Activated B cell treated with CpG ODN at 0.5 μM for 24 hours (primary cell): ENCODE measurements at regions of chr3 and their contacts with region 1.

Region 1: DNA sequence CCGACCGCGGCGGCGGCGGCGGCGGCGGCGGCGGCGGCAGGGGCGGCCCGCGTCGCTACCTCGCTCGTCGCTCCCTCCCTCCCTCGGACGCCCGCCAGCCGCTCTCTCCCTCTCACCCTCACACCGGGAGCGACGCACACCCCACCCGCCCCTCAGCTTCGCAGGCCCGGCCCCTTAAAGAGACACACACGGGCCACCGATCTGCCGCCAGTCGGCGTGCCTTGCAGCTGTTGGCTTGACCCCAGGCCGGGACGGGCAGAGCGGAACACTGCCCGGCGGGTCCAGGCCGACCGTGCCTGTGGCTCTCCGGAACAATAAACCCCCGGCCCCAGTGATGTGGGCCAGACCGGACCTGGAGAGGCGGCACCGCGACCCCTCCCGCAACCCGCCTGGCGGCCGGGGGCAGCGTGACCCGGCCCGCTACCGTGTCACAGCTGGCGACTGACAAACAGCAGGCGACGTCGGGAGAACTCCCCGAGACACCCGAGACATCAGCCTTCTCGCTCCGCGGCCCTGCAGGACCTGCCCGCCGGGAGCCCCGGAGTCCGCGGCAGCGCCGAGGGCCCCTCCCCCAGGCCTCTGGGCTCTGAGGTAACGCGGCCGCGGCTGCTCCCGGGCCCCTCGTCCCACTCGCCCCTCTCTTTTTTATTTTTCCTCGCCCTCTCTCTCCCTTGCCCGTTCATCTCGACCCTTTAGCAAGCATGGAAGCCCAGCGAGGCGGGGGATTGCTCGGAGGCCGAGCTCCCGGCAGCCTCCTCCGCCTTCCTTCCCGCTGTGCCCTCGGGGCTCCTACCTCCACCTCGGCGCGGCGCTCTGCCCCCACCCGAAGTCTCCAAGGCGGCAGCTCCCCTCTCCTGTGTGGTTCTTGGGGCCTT is at the start of gene SETD2:
- DNase-seq: peak; percentile 80
- ATAC-seq: peak; percentile 86
- H3K4me3 Mint-ChIP-seq: peak within 1 kb of the TSS; percentile 98
- H3K27ac Mint-ChIP-seq: peak within 1 kb of the TSS; percentile 96
- H3K4me1 Mint-ChIP-seq: peaks cover 53% of the 10 kb centered on the region
- H3K27me3 Mint-ChIP-seq: no peaks in the 10 kb centered on the region
- CTCF ChIP-seq: no peak
- total RNA-seq, gene SETD2: 56.9 and 65.7 TPM in 2 replicates

Region 2: DNA sequence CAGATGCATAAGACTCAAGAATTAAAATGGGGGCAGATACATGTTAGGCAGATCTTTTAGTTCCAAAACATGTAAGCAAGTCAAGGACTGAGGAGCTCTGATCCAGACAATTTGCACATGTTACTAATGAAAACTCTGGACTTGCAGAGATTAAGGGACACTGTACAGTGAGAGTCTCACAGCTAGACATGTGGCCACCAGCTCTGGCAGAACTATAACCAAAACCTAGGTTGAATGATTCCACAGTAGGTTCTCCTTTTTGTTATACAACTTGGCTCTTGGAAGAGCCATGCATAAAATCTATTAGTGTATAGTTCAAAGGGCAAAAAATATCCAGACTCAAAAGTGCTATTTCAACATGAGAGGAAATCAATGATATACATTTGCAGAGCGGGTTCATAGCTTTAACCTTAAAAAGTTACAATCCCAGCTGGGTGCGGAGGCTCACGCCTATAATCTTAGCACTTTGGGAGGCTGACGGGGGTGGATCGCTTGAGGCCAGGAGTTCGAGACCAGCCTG is 62.1 kb before region 1 on chr3:
- CTCF ChIA-PET with region 1: no interaction called
- POLR2A ChIA-PET with region 1: no interaction called
- intact Hi-C with region 1: no loop called
- DNase-seq: no peak
- ATAC-seq: no peak
- H3K4me3 Mint-ChIP-seq: no peak overlapping the region
- H3K27ac Mint-ChIP-seq: no peak overlapping the region
- H3K4me1 Mint-ChIP-seq: no peaks in the 10 kb centered on the region
- H3K27me3 Mint-ChIP-seq: no peaks in the 10 kb centered on the region
- CTCF ChIP-seq: no peak

Region 3: DNA sequence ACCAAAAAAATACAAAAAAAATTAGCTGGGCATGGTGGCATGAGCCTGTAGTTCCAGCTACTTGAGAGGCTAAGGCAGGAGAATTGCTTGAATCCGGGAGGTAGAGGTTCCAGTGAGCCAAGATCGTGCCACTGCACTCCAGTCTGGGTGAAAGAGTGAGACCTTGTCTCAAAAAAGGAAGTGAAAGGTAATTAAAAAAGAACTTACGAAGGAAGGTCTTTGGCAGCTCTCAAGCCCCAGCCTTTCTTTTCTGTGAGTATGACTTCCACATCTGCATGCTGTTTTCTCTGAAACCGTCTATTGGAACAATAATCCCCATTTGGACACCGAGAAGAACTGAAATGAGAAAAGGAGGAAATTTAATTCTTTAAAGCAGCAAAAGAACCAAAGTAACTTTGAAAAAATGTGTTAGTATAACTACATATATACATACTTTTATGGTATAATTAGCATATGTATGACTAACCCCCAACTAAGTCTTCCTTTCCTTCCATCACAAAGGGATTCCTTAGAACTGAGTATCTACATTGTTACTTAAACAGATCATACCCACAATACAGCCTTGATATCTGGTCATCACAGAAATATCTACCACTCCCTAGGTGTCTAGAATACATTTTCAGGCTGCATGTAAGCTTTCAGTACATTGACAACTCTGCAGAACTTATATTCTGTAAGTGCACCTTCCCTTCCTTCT is 50.4 kb before region 1 on chr3:
- CTCF ChIA-PET with region 1: interaction called, 4 read pairs
- POLR2A ChIA-PET with region 1: interaction called, 3 read pairs
- intact Hi-C with region 1: loop called (anchors 5 kb)
- DNase-seq: no peak
- ATAC-seq: peak; percentile 82
- H3K4me3 Mint-ChIP-seq: peak overlapping the region; percentile 21
- H3K27ac Mint-ChIP-seq: peak overlapping the region; percentile 36
- H3K4me1 Mint-ChIP-seq: peaks cover 26% of the 10 kb centered on the region
- H3K27me3 Mint-ChIP-seq: no peaks in the 10 kb centered on the region
- CTCF ChIP-seq: no peak

Region 4: DNA sequence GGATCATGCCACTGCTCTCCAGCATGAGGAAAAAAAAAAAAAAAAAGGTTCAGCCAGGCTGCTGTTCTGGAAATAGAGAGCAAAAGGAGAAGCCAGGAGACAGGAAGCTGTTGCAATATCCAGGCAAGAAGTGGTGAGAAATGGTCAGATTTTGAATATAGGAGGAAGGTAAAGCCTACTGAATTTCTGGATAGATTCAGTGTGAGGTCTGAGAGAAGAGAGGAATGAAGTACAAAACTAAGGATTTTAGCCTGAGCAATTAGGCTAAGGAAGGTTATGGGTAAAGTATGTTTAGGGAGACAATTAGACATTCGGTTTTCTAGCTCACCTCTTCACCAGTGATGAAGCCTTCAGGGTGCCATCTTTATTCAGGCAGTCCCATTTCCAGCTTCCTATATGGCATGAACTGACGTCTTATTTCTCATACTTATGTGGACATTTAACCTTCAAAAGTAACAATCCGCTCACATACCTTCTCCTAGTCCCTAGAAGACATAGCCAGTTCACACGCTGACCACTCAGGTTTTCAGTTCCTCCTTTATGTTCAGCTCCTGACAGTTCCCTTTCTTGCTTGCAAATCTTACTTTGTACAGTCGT is 61.2 kb after region 1 on chr3:
- CTCF ChIA-PET with region 1: interaction called, 5 read pairs
- POLR2A ChIA-PET with region 1: no interaction called
- intact Hi-C with region 1: loop called (anchors 5 kb)
- DNase-seq: no peak
- ATAC-seq: peak; percentile 54
- H3K4me3 Mint-ChIP-seq: no peak overlapping the region
- H3K27ac Mint-ChIP-seq: no peak overlapping the region
- H3K4me1 Mint-ChIP-seq: peaks cover 40% of the 10 kb centered on the region
- H3K27me3 Mint-ChIP-seq: no peaks in the 10 kb centered on the region
- CTCF ChIP-seq: no peak

Region 5: DNA sequence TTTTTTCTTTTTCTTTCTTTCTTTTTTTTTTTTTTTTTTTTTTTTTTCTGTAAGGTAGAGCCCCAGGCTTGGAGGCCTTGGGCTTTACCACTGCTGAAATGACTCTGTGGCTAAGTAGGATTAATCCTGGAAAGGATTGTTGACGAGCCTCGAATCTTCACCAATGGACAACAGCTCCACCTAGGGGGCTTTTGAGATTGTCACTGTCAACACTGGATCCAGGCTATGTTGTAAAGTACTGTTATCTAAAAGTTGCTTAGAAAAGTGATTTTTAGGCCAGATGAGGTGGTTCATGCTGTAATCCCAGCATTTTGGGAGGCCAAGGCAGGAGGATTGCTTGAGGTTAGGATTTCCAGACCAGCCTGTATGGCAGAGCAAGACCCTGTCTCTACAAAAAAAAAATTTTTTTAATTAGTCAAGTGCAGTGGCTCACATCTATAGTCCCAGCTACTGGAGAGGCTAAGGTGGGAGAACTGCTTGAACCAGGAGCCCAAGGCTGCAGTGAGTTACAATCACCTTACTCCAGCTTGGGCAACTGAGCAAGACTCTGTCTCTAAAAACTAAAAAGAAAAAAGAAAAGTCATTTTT is 160.1 kb after region 1 on chr3:
- CTCF ChIA-PET with region 1: interaction called, 26 read pairs
- POLR2A ChIA-PET with region 1: no interaction called
- intact Hi-C with region 1: loop called (anchors 1 kb)
- DNase-seq: no peak
- ATAC-seq: peak; percentile 65
- H3K4me3 Mint-ChIP-seq: no peak overlapping the region
- H3K27ac Mint-ChIP-seq: no peak overlapping the region
- H3K4me1 Mint-ChIP-seq: no peaks in the 10 kb centered on the region
- H3K27me3 Mint-ChIP-seq: no peaks in the 10 kb centered on the region
- CTCF ChIP-seq: peak; percentile 56

Region 6: GRCh38 chr3:47380601-47381316 is 216.5 kb after region 1 on chr3 and contains the start of gene PTPN23:
- CTCF ChIA-PET with region 1: no interaction called
- POLR2A ChIA-PET with region 1: interaction called, 13 read pairs
- intact Hi-C with region 1: loop called (anchors 1 kb)
- DNase-seq: peak; percentile 98
- ATAC-seq: peak; percentile 80
- H3K4me3 Mint-ChIP-seq: peak within 1 kb of the TSS; percentile 95
- H3K27ac Mint-ChIP-seq: peak within 1 kb of the TSS; percentile 96
- H3K4me1 Mint-ChIP-seq: peaks cover 49% of the 10 kb centered on the region
- H3K27me3 Mint-ChIP-seq: no peaks in the 10 kb centered on the region
- CTCF ChIP-seq: no peak
- total RNA-seq, gene PTPN23: 44.0 and 50.3 TPM in 2 replicates